ENCODE measurements at regions of chr2 and their contacts with region 1.

Region 1: DNA sequence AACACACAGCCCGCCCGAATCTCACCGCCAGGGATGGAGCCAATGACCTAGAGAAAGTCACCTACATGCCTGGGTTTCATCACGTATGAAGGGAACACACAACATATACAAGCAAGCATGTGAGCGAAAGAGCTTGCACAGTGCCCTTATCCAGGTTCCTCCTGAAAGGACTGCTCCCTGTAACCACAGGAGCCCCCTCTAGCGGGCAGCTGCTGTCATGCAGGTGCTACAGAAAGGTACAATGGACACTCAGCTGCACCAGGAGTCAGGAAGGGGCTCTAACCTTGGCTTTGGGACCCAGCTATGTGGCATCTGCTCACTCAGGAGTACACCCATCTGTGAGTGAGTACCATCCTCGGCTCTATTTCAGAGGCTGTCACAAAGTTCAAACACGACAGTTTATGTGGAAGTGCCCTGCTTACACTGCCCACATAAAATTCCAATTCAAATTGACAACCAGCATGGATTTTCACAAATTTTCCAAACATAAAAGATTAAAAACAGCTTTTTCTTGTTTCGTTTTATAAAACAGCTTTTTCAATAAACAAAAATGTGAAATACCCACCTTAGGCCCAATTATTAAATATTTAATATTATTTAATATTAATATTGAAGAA is 3.5 kb downstream of the NDUFA10 start:
- DNase-seq: peak; percentile 78
- ATAC-seq: no peak
- H3K4me3 Mint-ChIP-seq: no peak overlapping the region
- H3K27ac Mint-ChIP-seq: no peak overlapping the region
- H3K4me1 Mint-ChIP-seq: peaks cover 19% of the 10 kb centered on the region
- H3K27me3 Mint-ChIP-seq: peaks cover 1% of the 10 kb centered on the region

Region 2: GRCh38 chr2:239991689-239992314 is 29.8 kb before region 1 on chr2:
- CTCF ChIA-PET with region 1: interaction called, 10 read pairs
- DNase-seq: no peak
- ATAC-seq: peak; percentile 57
- H3K4me3 Mint-ChIP-seq: no peak overlapping the region
- H3K27ac Mint-ChIP-seq: no peak overlapping the region
- H3K4me1 Mint-ChIP-seq: no peaks in the 10 kb centered on the region
- H3K27me3 Mint-ChIP-seq: no peaks in the 10 kb centered on the region

Region 3: DNA sequence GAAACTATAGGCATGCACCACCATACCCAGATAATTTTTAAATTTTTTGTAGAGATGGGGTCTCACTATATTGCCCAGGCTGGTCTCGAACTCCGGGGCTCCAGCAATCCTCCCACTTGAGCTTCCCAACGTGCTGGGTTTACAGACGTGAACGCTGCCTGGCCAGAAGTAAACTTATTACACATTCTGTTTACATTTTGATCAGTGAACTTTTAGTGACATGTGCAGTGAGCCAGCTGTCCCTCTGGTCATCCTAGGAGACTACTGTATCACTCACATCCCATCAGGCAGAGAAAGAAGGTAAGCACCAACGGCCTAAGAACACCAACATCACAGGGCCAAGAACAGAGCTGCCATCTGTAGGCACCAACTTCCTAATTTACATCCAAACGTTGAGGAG is 18.6 kb before region 1 on chr2:
- CTCF ChIA-PET with region 1: no interaction called
- DNase-seq: no peak
- ATAC-seq: no peak
- H3K4me3 Mint-ChIP-seq: no peak overlapping the region
- H3K27ac Mint-ChIP-seq: no peak overlapping the region
- H3K4me1 Mint-ChIP-seq: no peaks in the 10 kb centered on the region
- H3K27me3 Mint-ChIP-seq: no peaks in the 10 kb centered on the region